ENCODE measurements at regions of chr9 and their contacts with region 1.

Region 1: DNA sequence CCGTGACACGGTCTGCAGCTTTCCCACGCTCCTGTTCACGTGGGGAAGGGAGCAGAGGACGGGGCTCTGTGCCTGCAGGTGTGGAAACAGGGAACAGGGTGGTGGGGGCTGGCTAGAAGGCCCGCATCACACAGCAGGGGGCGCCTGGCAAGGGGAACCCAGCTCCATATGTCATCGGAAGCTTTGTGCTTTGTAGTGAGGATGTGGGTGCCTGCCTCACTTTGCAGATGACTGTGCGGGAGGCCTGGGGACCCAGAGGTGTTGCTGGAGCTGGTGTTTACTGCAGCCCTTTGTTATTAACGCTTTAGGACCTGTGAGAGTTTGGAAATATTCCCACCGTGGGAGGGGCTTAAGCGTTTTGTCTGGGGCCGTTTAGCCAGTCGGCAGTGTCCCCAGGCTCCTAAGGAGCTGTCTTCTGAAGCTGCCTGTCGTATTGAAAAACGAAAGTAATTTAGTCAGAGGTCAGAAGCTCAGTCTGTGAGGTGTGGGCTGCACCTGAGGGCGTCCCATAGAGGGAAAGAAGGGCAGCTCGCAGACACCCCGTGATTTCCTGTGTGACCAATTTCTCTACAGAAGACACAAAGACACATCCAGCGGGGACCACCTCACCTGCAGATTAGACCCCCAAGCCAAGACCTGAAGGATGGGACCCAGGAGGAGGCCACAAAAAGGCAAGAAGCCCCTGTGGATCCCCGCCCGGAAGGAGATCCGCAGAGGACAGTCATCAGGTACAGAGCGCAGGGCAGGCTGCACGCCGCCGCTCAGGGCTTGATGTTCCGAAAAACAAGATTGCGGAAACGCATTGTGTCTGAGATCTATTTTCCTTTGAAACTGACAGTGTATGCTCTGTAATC is 9.1 kb downstream of the MAN1B1 start:
- DNase-seq: peak; percentile 79 to 92 (median 90)
- H3K4me3 ChIP-seq: peak overlapping the region; percentile 74
- H3K4me3 Mint-ChIP-seq: peak overlapping the region; percentile 76 to 90 (median 84)
- H3K27ac ChIP-seq: peak overlapping the region; percentile 78
- H3K27ac Mint-ChIP-seq: peak overlapping the region; percentile 91 to 99 (median 98)
- H3K4me1 ChIP-seq: peaks cover 21% of the 10 kb centered on the region
- H3K4me1 Mint-ChIP-seq: peaks cover 23 to 27% (median 24%) of the 10 kb centered on the region in 3 donors
- H3K27me3 ChIP-seq: no peaks in the 10 kb centered on the region
- H3K27me3 Mint-ChIP-seq: no peaks in the 10 kb centered on the region

Region 2: DNA sequence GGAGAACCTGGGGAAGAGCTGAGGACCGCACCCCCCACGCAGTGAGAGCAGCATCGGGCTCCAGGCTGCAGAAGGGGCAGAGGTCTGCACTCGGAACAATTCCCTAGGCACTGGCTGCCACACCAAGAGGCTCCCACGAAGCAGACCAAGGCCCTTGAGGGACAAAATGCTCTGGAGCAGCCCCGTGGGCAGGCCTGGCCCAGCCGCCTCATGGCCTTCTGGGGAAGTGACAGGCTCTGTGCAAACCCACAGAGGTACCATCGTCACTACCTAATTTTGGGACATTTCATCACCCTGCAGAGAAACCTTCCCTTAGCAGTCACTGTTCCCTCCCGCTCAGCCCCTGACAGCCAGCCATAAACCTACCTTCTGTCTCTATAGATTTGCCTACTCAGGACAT is 167.3 kb before region 1 on chr9:
- CTCF ChIA-PET with region 1: no interaction called
- POLR2A ChIA-PET with region 1: no interaction called
- DNase-seq: no peak
- H3K4me3 ChIP-seq: no peak overlapping the region
- H3K4me3 Mint-ChIP-seq: no peak overlapping the region
- H3K27ac ChIP-seq: no peak overlapping the region
- H3K27ac Mint-ChIP-seq: peak overlapping the region in 4 of 8 donors; percentile 23 to 60 (median 30)
- H3K4me1 ChIP-seq: no peaks in the 10 kb centered on the region
- H3K4me1 Mint-ChIP-seq: peaks cover 0 to 9% (median 8%) of the 10 kb centered on the region in 3 donors
- H3K27me3 ChIP-seq: no peaks in the 10 kb centered on the region
- H3K27me3 Mint-ChIP-seq: no peaks in the 10 kb centered on the region

Region 3: DNA sequence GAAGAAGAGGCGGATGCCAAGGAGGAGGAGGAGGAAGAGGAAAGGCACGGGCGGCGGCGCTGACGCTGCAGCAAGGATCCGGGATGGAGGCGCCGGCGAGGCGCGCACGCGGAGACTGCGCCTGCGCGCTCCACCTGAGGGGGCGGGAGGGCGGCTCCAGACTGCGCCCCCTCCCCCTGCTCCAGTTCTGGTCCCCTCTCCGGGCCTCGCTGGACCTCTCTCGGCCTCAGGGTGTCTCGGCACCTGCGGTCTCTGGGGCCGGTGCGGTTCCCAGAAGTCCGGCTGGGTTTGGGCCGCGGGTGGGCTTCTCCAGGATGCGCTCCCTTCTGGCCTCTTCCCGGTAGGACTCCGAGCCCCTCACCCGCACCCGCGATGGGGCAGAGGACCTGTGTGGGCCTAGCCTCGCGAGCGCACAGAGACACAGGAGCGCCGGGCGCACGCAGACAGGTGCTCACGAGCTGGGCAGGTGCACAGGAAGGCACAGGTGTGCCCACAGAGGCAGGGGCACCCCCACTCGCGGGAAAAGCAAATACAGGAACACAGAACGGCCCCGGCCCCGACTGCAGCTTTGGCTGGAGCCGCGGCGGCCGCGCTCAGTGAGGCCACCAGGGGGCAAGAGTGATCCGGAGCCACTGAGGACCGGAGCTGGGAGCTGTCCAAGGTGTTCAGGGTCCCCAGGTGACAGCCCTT is 49.6 kb before region 1 on chr9 and contains the start of gene NPDC1:
- CTCF ChIA-PET with region 1: interaction called, 10 read pairs
- POLR2A ChIA-PET with region 1: no interaction called
- DNase-seq: peak; percentile 68 to 83 (median 71)
- H3K4me3 ChIP-seq: peak within 1 kb of the TSS; percentile 47
- H3K4me3 Mint-ChIP-seq: peak within 1 kb of the TSS; percentile 70 to 87 (median 86)
- H3K27ac ChIP-seq: peak within 1 kb of the TSS; percentile 24
- H3K27ac Mint-ChIP-seq: peak within 1 kb of the TSS in 4 of 8 donors; percentile 38 to 60 (median 44)
- H3K4me1 ChIP-seq: peaks cover 27% of the 10 kb centered on the region
- H3K4me1 Mint-ChIP-seq: peaks cover 6 to 26% (median 13%) of the 10 kb centered on the region in 3 donors
- H3K27me3 ChIP-seq: peaks cover 49% of the 10 kb centered on the region
- H3K27me3 Mint-ChIP-seq: peaks cover 28 to 35% of the 10 kb centered on the region in 2 donors
- total RNA-seq, gene NPDC1: 24.6 to 27.5 TPM

Region 4: DNA sequence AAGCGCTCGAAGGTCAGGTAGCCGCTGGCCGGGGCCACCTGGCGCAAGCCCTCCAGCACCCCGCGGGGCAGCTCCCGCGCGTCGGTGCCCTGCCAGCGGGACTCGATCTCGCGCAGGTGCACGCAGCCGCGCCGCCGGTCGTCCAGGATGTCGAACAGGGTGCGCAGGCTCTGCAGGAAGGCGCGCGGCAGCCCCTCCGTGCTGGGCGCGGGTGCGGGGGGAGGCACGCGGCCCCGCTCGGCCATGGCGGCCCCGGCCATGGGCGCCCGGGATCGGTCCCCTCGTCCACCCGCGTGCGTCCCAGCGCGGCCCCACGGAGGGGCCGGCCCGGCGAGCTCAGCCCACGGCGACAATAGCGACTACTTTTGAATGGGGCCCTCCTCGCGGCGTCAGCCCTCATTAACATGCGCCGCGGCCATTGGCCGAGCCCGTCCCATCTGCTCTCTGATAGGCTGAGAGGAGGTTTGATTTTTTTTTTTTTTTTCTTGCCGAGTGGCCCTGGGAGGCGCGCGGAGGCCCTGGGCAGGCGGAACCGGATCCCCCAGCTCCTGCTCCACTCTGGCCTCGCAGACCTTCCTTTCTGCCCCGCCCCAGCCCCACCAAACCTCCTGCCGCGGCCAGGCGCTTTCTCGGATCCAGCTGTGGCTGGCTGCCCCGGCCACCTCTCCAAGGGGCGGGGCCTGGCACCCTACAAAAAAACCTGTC is 25.5 kb before region 1 on chr9 and contains the start of gene SAPCD2:
- CTCF ChIA-PET with region 1: interaction called, 21 read pairs
- POLR2A ChIA-PET with region 1: interaction called, 5 read pairs
- DNase-seq: peak; percentile 80 to 91 (median 85)
- H3K4me3 ChIP-seq: peak within 1 kb of the TSS; percentile 39
- H3K4me3 Mint-ChIP-seq: peak within 1 kb of the TSS; percentile 66 to 88 (median 77)
- H3K27ac ChIP-seq: peak within 1 kb of the TSS; percentile 65
- H3K27ac Mint-ChIP-seq: peak within 1 kb of the TSS in 6 of 8 donors; percentile 43 to 89 (median 75)
- H3K4me1 ChIP-seq: peaks cover 14% of the 10 kb centered on the region
- H3K4me1 Mint-ChIP-seq: peaks cover 6 to 19% (median 12%) of the 10 kb centered on the region in 3 donors
- H3K27me3 ChIP-seq: no peaks in the 10 kb centered on the region
- H3K27me3 Mint-ChIP-seq: peaks cover 3 to 4% of the 10 kb centered on the region in 2 donors
- total RNA-seq, gene SAPCD2: 11.5 to 12.7 TPM

Region 5: DNA sequence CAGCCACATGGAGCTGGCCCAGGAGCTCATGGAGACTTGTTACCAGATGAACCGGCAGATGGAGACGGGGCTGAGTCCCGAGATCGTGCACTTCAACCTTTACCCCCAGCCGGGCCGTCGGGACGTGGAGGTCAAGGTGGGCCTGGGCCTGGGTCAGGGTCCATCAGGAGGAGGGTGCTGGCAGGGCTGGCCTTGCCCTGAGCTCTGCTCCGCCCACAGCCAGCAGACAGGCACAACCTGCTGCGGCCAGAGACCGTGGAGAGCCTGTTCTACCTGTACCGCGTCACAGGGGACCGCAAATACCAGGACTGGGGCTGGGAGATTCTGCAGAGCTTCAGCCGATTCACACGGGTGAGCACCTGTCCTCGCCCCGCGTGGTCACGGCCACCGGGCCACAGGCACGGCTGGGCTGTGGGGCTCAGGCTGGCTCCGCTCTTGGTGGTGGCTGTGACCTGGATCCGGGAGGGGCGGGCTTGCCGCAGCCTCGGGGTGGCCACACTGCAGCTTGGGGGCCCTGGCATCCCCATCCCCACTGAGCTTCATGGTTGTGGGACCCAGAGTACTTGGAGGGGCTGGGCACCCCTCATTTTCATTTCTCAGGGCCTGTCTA is 11.5 kb after region 1 on chr9:
- CTCF ChIA-PET with region 1: interaction called, 14 read pairs
- POLR2A ChIA-PET with region 1: interaction called, 8 read pairs
- DNase-seq: no peak
- H3K4me3 ChIP-seq: no peak overlapping the region
- H3K4me3 Mint-ChIP-seq: no peak overlapping the region
- H3K27ac ChIP-seq: no peak overlapping the region
- H3K27ac Mint-ChIP-seq: no peak overlapping the region
- H3K4me1 ChIP-seq: no peaks in the 10 kb centered on the region
- H3K4me1 Mint-ChIP-seq: no peaks in the 10 kb centered on the region
- H3K27me3 ChIP-seq: no peaks in the 10 kb centered on the region
- H3K27me3 Mint-ChIP-seq: no peaks in the 10 kb centered on the region

Region 6: DNA sequence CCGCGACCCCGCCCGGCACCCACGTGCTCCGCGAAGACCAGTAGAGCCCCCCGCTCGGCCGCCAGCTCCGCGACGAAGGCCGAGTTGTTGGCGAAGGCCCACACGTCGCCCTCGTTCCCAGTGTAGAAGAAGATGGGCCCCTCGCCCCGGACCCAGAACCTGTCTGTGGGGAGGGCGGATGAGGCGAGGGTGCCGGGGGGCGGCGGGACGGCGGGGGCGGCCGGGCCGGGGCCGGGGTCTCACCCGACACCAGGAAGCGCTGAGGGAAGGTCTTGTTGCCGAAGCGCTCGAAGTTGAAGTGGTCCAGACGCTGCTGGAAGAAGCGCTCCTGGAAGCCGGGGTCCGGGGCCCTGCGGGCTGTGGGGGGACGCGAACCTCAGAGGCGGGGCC is 18.3 kb after region 1 on chr9:
- CTCF ChIA-PET with region 1: interaction called, 12 read pairs
- POLR2A ChIA-PET with region 1: interaction called, 4 read pairs
- DNase-seq: no peak
- H3K4me3 ChIP-seq: peak overlapping the region; percentile 50
- H3K4me3 Mint-ChIP-seq: peak overlapping the region; percentile 24 to 64 (median 51)
- H3K27ac ChIP-seq: peak overlapping the region; percentile 38
- H3K27ac Mint-ChIP-seq: peak overlapping the region in 1 of 8 donors; percentile 29
- H3K4me1 ChIP-seq: peaks cover 10% of the 10 kb centered on the region
- H3K4me1 Mint-ChIP-seq: peaks cover 0 to 12% (median 3%) of the 10 kb centered on the region in 3 donors
- H3K27me3 ChIP-seq: no peaks in the 10 kb centered on the region
- H3K27me3 Mint-ChIP-seq: peaks cover 0 to 1% of the 10 kb centered on the region in 2 donors

Region 7: GRCh38 chr9:137129456-137130175 is 33.7 kb after region 1 on chr9:
- CTCF ChIA-PET with region 1: interaction called, 6 read pairs
- POLR2A ChIA-PET with region 1: interaction called, 11 read pairs
- DNase-seq: peak; percentile 78 to 92 (median 89)
- H3K4me3 ChIP-seq: peak overlapping the region; percentile 78
- H3K4me3 Mint-ChIP-seq: peak overlapping the region; percentile 79 to 99 (median 88)
- H3K27ac ChIP-seq: peak overlapping the region; percentile 81
- H3K27ac Mint-ChIP-seq: peak overlapping the region; percentile 68 to 98 (median 88)
- H3K4me1 ChIP-seq: peaks cover 25% of the 10 kb centered on the region
- H3K4me1 Mint-ChIP-seq: peaks cover 27 to 36% (median 30%) of the 10 kb centered on the region in 3 donors
- H3K27me3 ChIP-seq: no peaks in the 10 kb centered on the region
- H3K27me3 Mint-ChIP-seq: peaks cover 11 to 20% of the 10 kb centered on the region in 2 donors

Region 8: DNA sequence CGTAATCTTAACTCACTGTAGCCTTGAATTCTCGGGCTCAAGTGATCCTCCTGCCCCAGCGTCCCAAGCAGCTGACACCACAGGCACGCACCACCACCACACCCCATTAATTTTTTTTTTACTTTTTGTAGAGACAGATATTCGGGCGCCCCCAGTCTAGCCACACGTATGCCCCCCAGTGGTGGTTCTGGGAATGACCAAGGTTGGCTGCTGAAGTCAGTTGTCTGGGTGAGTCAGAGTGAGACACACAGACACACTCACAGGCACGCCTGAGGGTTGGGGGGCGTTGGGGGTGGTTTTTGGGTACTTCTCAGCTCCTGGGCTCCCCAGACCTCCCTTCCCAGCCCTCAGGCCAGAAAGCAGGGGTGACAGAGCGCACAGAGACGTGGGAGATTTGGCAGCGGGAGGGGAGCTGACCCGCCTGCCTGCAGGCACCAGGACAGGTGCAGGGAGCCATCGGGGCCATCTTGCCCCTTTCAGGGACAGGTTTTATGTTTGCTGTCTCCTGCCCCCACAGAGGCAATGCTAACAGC is 349.4 kb after region 1 on chr9:
- CTCF ChIA-PET with region 1: no interaction called
- POLR2A ChIA-PET with region 1: no interaction called
- DNase-seq: peak; percentile 71 to 88 (median 76)
- H3K4me3 ChIP-seq: no peak overlapping the region
- H3K4me3 Mint-ChIP-seq: peak overlapping the region in 2 of 7 donors; percentile 10 to 41
- H3K27ac ChIP-seq: no peak overlapping the region
- H3K27ac Mint-ChIP-seq: peak overlapping the region in 4 of 8 donors; percentile 18 to 81 (median 52)
- H3K4me1 ChIP-seq: peaks cover 22% of the 10 kb centered on the region
- H3K4me1 Mint-ChIP-seq: peaks cover 17 to 27% (median 25%) of the 10 kb centered on the region in 3 donors
- H3K27me3 ChIP-seq: no peaks in the 10 kb centered on the region
- H3K27me3 Mint-ChIP-seq: peaks cover 16 to 26% of the 10 kb centered on the region in 2 donors